Caco-2 (cell line): ENCODE measurements at regions of chr20 and their contacts with region 1.

Region 1: DNA sequence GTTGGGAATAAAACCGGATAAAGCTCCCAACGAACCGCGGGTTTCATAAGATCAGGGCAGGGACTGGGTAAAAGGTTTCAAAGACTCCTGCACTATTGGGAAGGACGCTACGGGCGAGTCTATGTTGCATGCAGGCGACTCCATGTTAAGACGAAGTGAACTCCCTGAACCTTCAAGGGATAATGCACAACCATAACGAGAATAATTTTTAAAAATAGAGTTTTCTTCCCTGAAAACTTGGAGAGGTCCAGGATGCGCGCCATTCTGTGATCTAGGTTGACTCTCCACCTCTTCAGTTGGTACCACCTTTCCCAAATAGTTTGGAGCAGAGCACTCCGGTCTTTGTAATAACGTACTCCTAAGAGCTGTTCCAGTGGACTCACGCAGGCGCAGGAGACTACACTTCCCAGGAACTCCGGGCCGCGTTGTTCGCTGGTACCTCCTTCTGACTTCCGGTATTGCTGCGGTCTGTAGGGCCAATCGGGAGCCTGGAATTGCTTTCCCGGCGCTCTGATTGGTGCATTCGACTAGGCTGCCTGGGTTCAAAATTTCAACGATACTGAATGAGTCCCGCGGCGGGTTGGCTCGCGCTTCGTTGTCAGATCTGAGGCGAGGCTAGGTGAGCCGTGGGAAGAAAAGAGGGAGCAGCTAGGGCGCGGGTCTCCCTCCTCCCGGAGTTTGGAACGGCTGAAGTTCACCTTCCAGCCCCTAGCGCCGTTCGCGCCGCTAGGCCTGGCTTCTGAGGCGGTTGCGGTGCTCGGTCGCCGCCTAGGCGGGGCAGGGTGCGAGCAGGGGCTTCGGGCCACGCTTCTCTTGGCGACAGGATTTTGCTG is at the start of gene TPX2:
- DNase-seq: peak; percentile 99 to 100
- H3K4me3 ChIP-seq: peak within 1 kb of the TSS; percentile 72
- H3K4me3 Mint-ChIP-seq: no peak within 1 kb of the TSS
- H3K27ac Mint-ChIP-seq: no peak within 1 kb of the TSS
- H3K4me1 ChIP-seq: 0 out of 2 replicates have a peak, but pooled peaks cover 6% of the 10 kb centered on the region
- H3K4me1 Mint-ChIP-seq: no peaks in the 10 kb centered on the region
- H3K27me3 ChIP-seq: no peaks in the 10 kb centered on the region
- H3K27me3 Mint-ChIP-seq: no peaks in the 10 kb centered on the region
- CTCF ChIP-seq: peak in 1 of 2 experiments; percentile 66
- total RNA-seq, gene TPX2: 221 and 237 TPM in 2 replicates

Region 2: DNA sequence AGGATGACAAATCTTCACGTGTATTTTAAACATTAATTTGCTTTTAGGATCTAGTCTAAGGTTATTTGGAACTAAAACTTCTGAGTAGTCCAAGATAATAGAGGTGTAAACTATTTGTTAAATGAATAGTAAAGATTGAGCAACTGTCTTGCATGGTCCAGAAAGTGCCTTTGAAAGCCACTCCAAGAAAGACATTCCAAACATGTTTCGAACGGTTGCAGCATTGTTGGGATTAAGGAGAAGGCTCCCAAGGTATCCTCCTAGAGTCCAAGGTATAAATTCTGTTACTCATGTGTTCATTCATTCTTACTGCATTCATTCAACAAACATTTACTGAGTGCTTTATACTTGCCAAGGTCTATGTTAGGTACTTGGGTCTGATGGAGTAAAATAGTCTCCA is 51.5 kb after region 1 on chr20:
- CTCF ChIA-PET with region 1: interaction called, 3 read pairs
- POLR2A ChIA-PET with region 1: no interaction called
- intact Hi-C with region 1: loop called (anchors 1 kb)
- DNase-seq: peak; percentile 83 to 89
- H3K4me3 ChIP-seq: no peak overlapping the region
- H3K4me3 Mint-ChIP-seq: no peak overlapping the region
- H3K27ac Mint-ChIP-seq: no peak overlapping the region
- H3K4me1 ChIP-seq: peaks cover 39% of the 10 kb centered on the region
- H3K4me1 Mint-ChIP-seq: peaks cover 18% of the 10 kb centered on the region
- H3K27me3 ChIP-seq: no peaks in the 10 kb centered on the region
- H3K27me3 Mint-ChIP-seq: no peaks in the 10 kb centered on the region
- CTCF ChIP-seq: no peak